ENCODE measurements at regions of chr19 and their contacts with region 1.

Region 1: DNA sequence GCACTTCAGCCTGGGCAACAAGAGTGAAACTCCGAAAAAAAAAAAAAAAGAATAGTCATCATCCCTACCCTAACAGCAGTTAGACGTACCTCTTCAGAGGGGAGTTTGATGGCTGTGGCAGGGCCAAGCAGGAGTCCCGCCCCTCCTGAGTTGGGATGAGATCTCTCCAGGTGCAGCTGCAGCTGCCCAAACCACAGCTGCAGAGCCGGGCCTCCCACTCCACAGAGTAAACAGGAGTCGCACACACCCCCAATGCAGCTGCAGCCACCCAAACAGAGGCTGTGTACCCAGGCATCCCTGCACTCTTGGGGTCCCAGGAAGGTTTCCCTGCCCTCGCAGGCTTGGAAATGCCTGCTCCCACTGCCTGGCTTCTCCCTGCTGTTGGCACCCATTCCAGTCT is 17.4 kb upstream of the MLLT1 start:
- DNase-seq: no peak
- ATAC-seq: no peak
- H3K4me3 ChIP-seq: no peak overlapping the region
- H3K4me3 Mint-ChIP-seq: no peak overlapping the region
- H3K27ac ChIP-seq: no peak overlapping the region
- H3K27ac Mint-ChIP-seq: no peak overlapping the region
- H3K4me1 ChIP-seq: no peaks in the 10 kb centered on the region
- H3K4me1 Mint-ChIP-seq: no peaks in the 10 kb centered on the region
- H3K27me3 ChIP-seq: no peaks in the 10 kb centered on the region
- H3K27me3 Mint-ChIP-seq: no peaks in the 10 kb centered on the region
- CTCF ChIP-seq: no peak

Region 2: DNA sequence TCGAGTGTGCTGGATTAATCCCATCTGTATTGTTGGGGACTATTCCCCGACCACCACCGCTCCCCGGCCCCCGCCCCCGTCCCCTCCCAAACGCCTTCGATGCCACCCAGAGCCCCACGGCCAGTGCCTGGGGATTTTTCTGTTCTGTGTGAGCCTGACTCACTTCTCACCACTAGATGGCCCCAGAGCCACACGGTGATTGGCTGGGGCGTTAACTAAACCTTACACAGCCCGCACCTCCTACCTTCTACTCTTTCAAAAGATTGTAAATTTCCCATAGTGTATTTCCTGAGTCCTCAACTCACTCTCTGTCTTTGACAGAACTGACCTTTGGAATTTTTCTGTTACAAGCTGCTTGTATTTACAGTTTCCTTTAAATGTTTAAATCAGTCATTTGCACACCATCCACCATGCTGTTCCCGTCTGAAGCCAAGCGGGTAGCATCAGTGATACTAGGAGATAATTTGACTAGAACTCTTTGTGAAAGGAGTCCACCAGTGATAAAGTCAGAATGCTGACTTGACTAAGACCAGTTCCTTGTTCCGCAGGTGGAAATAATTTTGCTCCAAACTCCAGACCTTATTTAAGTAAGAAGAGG is 248.3 kb before region 1 on chr19:
- CTCF ChIA-PET with region 1: no interaction called
- POLR2A ChIA-PET with region 1: no interaction called
- intact Hi-C with region 1: loop called in 1 of 2 experiments (anchors 2 kb)
- DNase-seq: peak; percentile 65 to 90 (median 74)
- ATAC-seq: peak; percentile 99
- H3K4me3 ChIP-seq: no peak overlapping the region
- H3K4me3 Mint-ChIP-seq: no peak overlapping the region
- H3K27ac ChIP-seq: no peak overlapping the region
- H3K27ac Mint-ChIP-seq: no peak overlapping the region
- H3K4me1 ChIP-seq: peaks cover 3% of the 10 kb centered on the region
- H3K4me1 Mint-ChIP-seq: peaks cover 6% of the 10 kb centered on the region
- H3K27me3 ChIP-seq: no peaks in the 10 kb centered on the region
- H3K27me3 Mint-ChIP-seq: peaks cover 7% of the 10 kb centered on the region
- CTCF ChIP-seq: peak; percentile 91

Region 3: GRCh38 chr19:6161271-6161850 is 135.8 kb before region 1 on chr19:
- CTCF ChIA-PET with region 1: no interaction called
- POLR2A ChIA-PET with region 1: no interaction called
- intact Hi-C with region 1: loop called in 1 of 2 experiments (anchors 1 kb)
- DNase-seq: peak in 11 of 14 experiments; percentile 6 to 90 (median 51)
- ATAC-seq: peak; percentile 85
- H3K4me3 ChIP-seq: no peak overlapping the region
- H3K4me3 Mint-ChIP-seq: peak overlapping the region; percentile 42
- H3K27ac ChIP-seq: no peak overlapping the region
- H3K27ac Mint-ChIP-seq: no peak overlapping the region
- H3K4me1 ChIP-seq: peaks cover 13% of the 10 kb centered on the region
- H3K4me1 Mint-ChIP-seq: peaks cover 13% of the 10 kb centered on the region
- H3K27me3 ChIP-seq: no peaks in the 10 kb centered on the region
- H3K27me3 Mint-ChIP-seq: no peaks in the 10 kb centered on the region
- CTCF ChIP-seq: no peak

Region 4: GRCh38 chr19:6249296-6249695 is 47.9 kb before region 1 on chr19:
- CTCF ChIA-PET with region 1: no interaction called
- POLR2A ChIA-PET with region 1: no interaction called
- intact Hi-C with region 1: no loop called
- DNase-seq: no peak
- ATAC-seq: no peak
- H3K4me3 ChIP-seq: no peak overlapping the region
- H3K4me3 Mint-ChIP-seq: no peak overlapping the region
- H3K27ac ChIP-seq: no peak overlapping the region
- H3K27ac Mint-ChIP-seq: no peak overlapping the region
- H3K4me1 ChIP-seq: peaks cover 1% of the 10 kb centered on the region
- H3K4me1 Mint-ChIP-seq: peaks cover 57% of the 10 kb centered on the region
- H3K27me3 ChIP-seq: no peaks in the 10 kb centered on the region
- H3K27me3 Mint-ChIP-seq: no peaks in the 10 kb centered on the region
- CTCF ChIP-seq: no peak